Activated CD4-positive, alpha-beta memory T cell treated with anti-CD3 and anti-CD28 coated beads for 36 hours (primary cell): ENCODE measurements at regions of chr20 and their contacts with region 1.

Region 1: DNA sequence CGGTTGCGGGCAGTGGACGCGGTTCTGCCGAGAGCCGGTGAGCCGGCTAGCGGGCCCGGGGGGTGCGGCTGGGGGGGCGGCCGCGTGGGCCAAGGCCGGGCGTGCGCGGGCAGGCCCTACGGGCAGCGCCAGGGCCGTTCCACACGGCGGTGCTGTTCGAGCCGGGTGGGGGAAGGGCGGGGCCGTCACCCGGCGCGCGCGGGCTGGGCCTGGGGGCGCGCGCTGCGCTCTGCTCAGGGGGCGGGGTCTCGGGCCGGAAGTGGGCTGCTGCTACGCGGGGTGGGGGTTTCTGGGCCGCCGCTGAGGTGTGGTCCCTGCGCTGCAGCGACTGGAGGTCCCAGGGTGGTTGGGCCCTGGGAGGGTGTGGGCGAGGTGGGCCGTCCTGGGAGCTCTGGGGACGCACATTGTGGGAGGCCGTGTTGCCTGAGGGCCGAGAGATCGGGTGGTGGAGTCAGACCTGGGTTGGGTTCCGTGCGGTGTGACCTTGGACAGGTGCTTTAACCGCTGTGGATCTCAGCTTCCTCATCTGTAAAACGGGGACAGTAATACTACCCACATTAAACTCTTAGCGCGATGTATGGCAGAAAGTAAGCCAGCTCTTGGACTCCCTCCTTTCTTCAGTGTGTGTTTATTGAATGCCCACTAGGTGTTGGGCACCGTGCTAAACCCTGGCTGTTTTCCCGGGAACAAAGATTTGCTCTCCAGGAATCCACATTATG is 397 bp downstream of the MAPRE1 start:
- DNase-seq: peak; percentile 86
- H3K4me3 Mint-ChIP-seq: peak overlapping the region; percentile 98
- H3K27ac Mint-ChIP-seq: peak overlapping the region; percentile 94
- H3K4me1 Mint-ChIP-seq: peaks cover 36% of the 10 kb centered on the region
- H3K27me3 Mint-ChIP-seq: no peaks in the 10 kb centered on the region

Region 2: GRCh38 chr20:32839227-32839981 is 19.3 kb after region 1 on chr20:
- CTCF ChIA-PET with region 1: interaction called, 6 read pairs
- POLR2A ChIA-PET with region 1: interaction called, 3 read pairs
- intact Hi-C with region 1: loop called (anchors 1 kb)
- DNase-seq: peak; percentile 56
- H3K4me3 Mint-ChIP-seq: no peak overlapping the region
- H3K27ac Mint-ChIP-seq: peak overlapping the region; percentile 84
- H3K4me1 Mint-ChIP-seq: peaks cover 40% of the 10 kb centered on the region
- H3K27me3 Mint-ChIP-seq: no peaks in the 10 kb centered on the region

Region 3: GRCh38 chr20:32908334-32909292 is 88.5 kb after region 1 on chr20:
- CTCF ChIA-PET with region 1: no interaction called
- POLR2A ChIA-PET with region 1: no interaction called
- intact Hi-C with region 1: no loop called
- DNase-seq: no peak
- H3K4me3 Mint-ChIP-seq: no peak overlapping the region
- H3K27ac Mint-ChIP-seq: no peak overlapping the region
- H3K4me1 Mint-ChIP-seq: peaks cover 8% of the 10 kb centered on the region
- H3K27me3 Mint-ChIP-seq: no peaks in the 10 kb centered on the region

Region 4: DNA sequence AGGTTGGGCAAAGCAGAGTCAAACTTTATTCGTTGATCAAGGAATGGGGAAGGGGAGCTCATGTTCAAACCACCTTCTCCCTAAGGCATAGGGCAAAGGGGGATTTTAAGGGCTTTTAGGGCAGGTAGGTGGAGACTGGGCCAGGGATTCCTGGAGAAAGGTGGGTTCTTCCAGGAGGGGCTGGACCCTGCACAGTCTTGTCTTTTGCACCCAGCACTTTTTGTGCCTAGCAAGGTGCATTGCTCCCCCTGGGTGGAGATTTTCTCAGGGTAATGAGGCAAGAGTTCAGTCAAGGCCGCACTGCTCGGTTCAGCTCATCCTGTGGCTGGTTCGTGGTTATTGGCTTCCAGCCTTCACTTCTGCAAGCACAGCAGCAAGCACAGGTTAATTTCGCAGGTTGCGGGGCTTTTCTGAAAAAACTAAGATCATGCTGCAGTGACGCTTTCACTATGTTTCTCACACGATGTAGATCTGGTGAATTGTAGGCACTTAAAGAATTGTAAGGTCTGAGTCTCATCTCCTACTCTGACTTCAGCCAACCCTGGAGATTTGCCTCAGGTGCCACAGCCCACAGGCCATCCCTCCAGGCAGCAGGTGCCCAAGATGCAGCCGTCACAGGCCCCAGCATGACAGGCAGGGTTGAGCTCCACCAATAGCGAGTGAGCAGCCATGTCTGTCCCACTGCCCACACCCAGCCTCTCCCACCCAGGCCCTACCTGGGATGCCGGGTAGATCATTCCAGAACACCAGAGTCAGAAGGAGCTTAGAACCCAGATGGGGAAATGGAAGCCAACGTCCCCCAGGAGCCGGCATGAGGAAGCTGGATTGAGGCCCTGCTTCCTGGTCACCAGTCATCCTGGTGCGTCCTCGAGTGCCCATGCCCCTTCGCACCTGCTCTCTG is 147.0 kb after region 1 on chr20:
- CTCF ChIA-PET with region 1: no interaction called
- POLR2A ChIA-PET with region 1: interaction called, 4 read pairs
- intact Hi-C with region 1: loop called (anchors 1 kb)
- DNase-seq: peak; percentile 84
- H3K4me3 Mint-ChIP-seq: peak overlapping the region; percentile 50
- H3K27ac Mint-ChIP-seq: no peak overlapping the region
- H3K4me1 Mint-ChIP-seq: peaks cover 72% of the 10 kb centered on the region
- H3K27me3 Mint-ChIP-seq: no peaks in the 10 kb centered on the region